ENCODE measurements at regions of chr6 and their contacts with region 1.

Region 1: DNA sequence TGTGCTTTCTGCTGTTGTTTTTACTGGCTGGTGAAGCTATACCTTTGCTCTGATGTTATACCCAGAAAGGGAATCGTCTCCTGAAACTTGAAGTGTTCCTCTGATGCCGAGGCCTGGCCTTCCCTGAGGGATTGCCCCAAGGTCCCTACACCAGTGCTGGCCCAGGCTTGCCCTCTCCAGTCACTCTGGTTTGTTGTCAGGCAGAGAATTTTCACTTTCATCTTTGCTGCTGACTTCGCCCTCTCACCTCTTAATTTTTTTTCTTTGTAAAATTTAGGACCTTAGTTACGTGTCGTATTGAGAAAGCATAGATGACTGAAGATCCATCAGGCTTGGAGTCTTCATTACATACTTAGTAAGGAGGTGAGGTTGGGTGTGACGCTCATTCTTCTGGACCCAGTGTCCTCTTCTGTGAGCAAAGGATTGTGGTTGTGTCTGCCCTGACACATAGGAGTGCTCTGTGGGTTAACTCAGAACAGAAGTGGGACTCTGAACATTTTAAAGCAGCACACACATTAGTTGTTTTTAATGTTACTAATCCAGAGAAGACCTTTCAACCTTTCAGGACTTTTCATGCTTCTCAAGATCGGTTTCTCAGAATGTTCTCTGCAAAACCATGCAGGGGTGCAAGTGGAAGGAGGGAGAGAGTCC is 45.4 kb downstream of the TULP4 start:
- DNase-seq: no peak
- H3K4me3 ChIP-seq: no peak overlapping the region
- H3K27ac ChIP-seq: no peak overlapping the region
- H3K4me1 ChIP-seq: no peaks in the 10 kb centered on the region
- H3K27me3 ChIP-seq: no peaks in the 10 kb centered on the region
- CTCF ChIP-seq: no peak

Region 2: GRCh38 chr6:158072083-158072721 is 285.5 kb before region 1 on chr6:
- CTCF ChIA-PET with region 1: no interaction called
- POLR2A ChIA-PET with region 1: no interaction called
- intact Hi-C with region 1: no loop called
- DNase-seq: peak in 1 of 2 experiments; percentile 46
- H3K4me3 ChIP-seq: no peak overlapping the region
- H3K27ac ChIP-seq: no peak overlapping the region
- H3K4me1 ChIP-seq: peaks cover 36% of the 10 kb centered on the region
- H3K27me3 ChIP-seq: no peaks in the 10 kb centered on the region
- CTCF ChIP-seq: peak; percentile 88

Region 3: GRCh38 chr6:158322724-158323560 is 34.7 kb before region 1 on chr6:
- CTCF ChIA-PET with region 1: interaction called, 12 read pairs
- POLR2A ChIA-PET with region 1: no interaction called
- intact Hi-C with region 1: no loop called
- DNase-seq: peak in 1 of 2 experiments; percentile 81
- H3K4me3 ChIP-seq: no peak overlapping the region
- H3K27ac ChIP-seq: peak overlapping the region; percentile 49
- H3K4me1 ChIP-seq: peaks cover 30% of the 10 kb centered on the region
- H3K27me3 ChIP-seq: no peaks in the 10 kb centered on the region
- CTCF ChIP-seq: no peak

Measured in PC-9 (cell line).